ENCODE measurements at regions of chrX and their contacts with region 1.

Region 1: DNA sequence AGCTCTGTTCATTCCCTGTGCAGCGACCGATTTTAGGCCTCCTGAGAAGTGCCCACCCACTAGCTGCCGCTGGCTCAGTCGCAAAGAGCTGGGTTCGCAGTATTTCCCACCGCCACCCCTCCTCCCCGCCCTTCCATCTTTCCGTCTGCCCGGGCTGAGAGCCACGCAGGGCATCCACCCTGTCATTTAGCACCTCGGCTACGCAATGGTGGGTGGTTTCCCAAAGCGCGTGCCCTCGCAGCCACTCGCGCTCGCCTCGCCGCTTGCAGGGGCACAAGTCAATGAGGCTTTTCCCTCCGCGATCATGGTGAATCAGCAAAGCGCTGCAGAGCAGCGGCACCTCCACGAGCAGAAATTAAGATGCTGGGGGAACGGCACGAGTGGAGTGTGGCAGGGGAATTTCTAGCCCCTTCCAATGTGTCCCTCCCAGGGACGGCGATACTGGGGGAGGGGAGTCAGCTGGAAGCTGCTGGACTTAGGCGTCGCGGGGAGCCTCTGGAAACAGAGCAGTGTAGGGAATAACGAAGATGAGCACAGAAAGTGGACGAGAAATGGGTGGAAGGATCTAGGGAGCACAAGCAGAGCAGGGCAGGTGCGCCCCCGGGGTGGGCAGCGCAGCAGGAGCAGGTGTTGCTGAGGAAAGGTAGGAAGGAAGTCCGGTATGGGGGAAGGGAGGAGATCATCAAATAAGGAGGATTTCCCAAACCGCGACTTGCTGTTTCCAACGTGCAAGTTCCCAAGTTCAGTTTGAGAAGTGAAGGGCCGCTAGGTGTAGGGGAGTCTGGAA is 2.4 kb upstream of the PTCHD1 start:
- DNase-seq: peak; percentile 15
- ATAC-seq: no peak
- H3K4me3 Mint-ChIP-seq: peak overlapping the region; percentile 91
- H3K27ac Mint-ChIP-seq: peak overlapping the region; percentile 84
- H3K4me1 Mint-ChIP-seq: peaks cover 24% of the 10 kb centered on the region
- H3K27me3 Mint-ChIP-seq: peaks cover 15% of the 10 kb centered on the region
- CTCF ChIP-seq: no peak

Region 2: DNA sequence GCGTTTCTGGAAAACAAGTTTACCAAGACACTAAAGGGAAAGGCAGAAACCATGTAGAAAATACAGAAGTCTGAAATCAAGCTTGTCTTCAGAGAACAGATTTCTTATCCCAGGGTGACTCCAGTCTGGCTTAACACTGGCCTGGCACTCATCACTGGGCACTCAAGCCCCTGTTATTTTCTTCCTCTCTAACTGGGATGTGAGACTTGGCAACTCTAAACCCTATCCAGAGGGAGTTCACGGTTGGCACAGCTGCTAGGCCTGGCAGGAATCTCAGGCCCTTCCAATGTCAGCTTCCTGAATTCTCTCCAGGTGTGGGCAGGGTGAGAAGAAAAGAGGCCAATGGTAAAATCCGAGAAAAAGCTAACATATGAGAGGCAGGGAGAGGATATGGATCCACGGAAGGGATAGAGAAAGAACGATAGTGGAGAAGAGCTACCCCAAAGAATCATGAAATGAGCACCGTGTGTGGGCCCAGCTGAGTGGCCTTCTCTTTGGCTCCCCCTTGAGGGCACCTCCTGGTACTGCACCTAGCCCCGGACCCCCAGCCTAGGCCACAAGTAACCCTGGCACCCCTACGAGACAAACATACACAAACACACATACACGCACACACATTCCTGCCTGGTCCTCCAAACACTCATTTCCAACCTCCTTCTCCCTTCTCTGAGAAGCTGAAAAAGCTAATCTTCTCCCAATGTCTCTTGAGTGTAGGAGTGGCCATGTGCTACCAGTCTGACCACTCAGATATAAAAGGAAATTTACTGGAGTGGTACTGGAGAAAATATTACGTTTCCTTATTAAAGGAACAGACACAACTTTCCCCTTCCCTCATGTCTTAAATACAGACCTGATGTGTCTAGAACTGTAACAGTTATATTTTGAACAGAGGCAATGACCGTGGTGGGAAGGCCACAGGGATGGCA is 14.2 kb before region 1 on chrX:
- CTCF ChIA-PET with region 1: interaction called, 10 read pairs
- POLR2A ChIA-PET with region 1: no interaction called
- DNase-seq: peak; percentile 57
- ATAC-seq: peak; percentile 88
- H3K4me3 Mint-ChIP-seq: no peak overlapping the region
- H3K27ac Mint-ChIP-seq: no peak overlapping the region
- H3K4me1 Mint-ChIP-seq: no peaks in the 10 kb centered on the region
- H3K27me3 Mint-ChIP-seq: no peaks in the 10 kb centered on the region
- CTCF ChIP-seq: peak; percentile 91

Region 3: DNA sequence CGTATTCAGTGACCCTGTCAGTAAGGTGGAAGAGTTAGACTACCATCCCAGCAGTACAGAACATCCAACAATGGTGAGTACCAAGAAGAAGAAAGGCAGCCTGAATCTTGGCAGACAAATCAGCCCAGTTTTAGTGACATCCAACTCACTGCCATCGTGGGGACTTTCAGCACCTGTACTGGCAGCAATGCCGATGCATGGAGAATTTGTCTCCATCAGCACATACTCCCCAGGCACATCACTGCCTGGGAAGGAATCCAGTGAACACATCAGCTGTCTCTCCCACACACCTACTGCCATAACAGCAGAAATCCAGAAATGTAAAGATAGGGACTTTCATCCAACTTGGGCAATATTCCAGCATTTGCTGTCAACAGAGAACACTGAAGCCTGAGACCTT is 32.1 kb after region 1 on chrX:
- CTCF ChIA-PET with region 1: no interaction called
- POLR2A ChIA-PET with region 1: no interaction called
- DNase-seq: no peak
- ATAC-seq: no peak
- H3K4me3 Mint-ChIP-seq: no peak overlapping the region
- H3K27ac Mint-ChIP-seq: no peak overlapping the region
- H3K4me1 Mint-ChIP-seq: 0 out of 2 replicates have a peak, but pooled peaks cover 2% of the 10 kb centered on the region
- H3K27me3 Mint-ChIP-seq: no peaks in the 10 kb centered on the region
- CTCF ChIP-seq: no peak

Measured in WTC11 (cell line).